ENCODE measurements at regions of chr11 and their contacts with region 1.

Region 1: GRCh38 chr11:102268329-102269193 is 48.7 kb upstream of the BIRC3 start:
- DNase-seq: peak; percentile 92
- H3K4me3 Mint-ChIP-seq: peak overlapping the region; percentile 24
- H3K27ac Mint-ChIP-seq: no peak overlapping the region
- H3K4me1 Mint-ChIP-seq: peaks cover 31% of the 10 kb centered on the region
- H3K27me3 Mint-ChIP-seq: no peaks in the 10 kb centered on the region

Region 2: GRCh38 chr11:102109896-102110760 is 158.4 kb before region 1 on chr11 and contains the start of gene YAP1:
- CTCF ChIA-PET with region 1: no interaction called
- POLR2A ChIA-PET with region 1: no interaction called
- intact Hi-C with region 1: loop called (anchors 5 kb)
- DNase-seq: peak; percentile 75
- H3K4me3 Mint-ChIP-seq: peak within 1 kb of the TSS; percentile 90
- H3K27ac Mint-ChIP-seq: no peak within 1 kb of the TSS
- H3K4me1 Mint-ChIP-seq: peaks cover 9% of the 10 kb centered on the region
- H3K27me3 Mint-ChIP-seq: peaks cover 23% of the 10 kb centered on the region
- total RNA-seq, gene YAP1: 0.24 to 0.71 TPM

Region 3: DNA sequence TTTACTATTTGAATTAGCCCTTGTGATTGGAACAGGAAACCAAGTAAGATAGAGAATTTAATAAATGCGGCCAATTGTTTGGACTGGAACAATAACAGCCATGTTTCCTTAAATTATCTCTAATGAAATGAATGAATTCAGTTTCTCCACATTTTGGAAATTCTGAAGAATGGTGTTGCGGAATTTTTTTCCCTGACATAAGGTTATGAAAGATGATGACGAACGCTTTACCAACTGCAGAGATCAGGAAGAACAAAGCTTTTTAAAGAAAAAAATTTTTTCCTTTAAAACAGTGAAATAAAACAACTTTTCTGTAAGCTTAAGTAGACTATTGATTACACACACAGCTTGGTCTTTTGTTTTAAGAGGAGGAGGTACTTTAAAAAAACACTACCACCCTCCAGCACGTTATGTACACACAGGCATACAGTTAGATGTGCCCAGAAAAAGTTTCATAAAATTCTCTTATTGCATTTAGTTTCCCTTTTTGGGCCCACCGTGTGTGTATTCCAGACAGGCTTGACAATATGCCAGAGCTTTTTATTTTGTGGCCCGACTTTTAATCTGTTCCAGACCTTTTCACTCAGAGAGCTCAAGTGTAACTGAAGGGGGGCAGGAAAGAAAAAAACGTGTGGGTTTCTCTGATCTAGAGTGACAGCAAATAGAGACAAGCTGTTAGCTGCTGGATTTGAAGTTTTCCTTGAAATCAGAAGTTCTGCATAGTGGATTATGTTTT is 81.0 kb before region 1 on chr11:
- CTCF ChIA-PET with region 1: no interaction called
- POLR2A ChIA-PET with region 1: no interaction called
- intact Hi-C with region 1: no loop called
- DNase-seq: no peak
- H3K4me3 Mint-ChIP-seq: no peak overlapping the region
- H3K27ac Mint-ChIP-seq: no peak overlapping the region
- H3K4me1 Mint-ChIP-seq: no peaks in the 10 kb centered on the region
- H3K27me3 Mint-ChIP-seq: peaks cover 10% of the 10 kb centered on the region

Region 4: GRCh38 chr11:102204174-102204573 is 64.4 kb before region 1 on chr11:
- CTCF ChIA-PET with region 1: no interaction called
- POLR2A ChIA-PET with region 1: no interaction called
- intact Hi-C with region 1: no loop called
- DNase-seq: no peak
- H3K4me3 Mint-ChIP-seq: no peak overlapping the region
- H3K27ac Mint-ChIP-seq: no peak overlapping the region
- H3K4me1 Mint-ChIP-seq: no peaks in the 10 kb centered on the region
- H3K27me3 Mint-ChIP-seq: peaks cover 8% of the 10 kb centered on the region

Region 5: DNA sequence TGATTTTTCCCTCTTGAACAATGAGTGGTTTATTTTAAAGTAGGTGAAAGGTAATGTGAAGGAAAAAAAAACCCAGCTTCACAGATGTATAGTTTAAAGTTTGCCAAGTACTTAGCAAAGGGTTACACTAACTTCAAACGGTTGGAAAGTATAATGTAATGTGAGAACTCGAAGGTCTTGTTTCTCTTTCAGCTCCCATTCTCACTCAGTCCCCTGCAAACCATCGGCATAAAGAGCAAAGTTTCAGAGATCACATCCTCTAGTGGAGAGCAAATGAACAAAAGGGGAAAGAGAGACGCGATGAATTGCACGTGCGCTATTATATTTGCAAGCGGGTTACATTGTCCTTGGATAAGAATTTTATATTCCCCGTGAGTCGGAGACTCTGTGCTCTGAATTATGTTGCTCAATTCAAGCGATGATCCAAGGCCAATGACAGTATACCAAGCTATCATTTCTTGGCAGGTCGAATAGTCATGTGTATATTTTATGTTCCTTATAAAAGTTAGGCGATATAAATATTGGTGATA is 11.1 kb after region 1 on chr11:
- CTCF ChIA-PET with region 1: interaction called, 12 read pairs
- POLR2A ChIA-PET with region 1: no interaction called
- intact Hi-C with region 1: loop called (anchors 1 kb)
- DNase-seq: no peak
- H3K4me3 Mint-ChIP-seq: no peak overlapping the region
- H3K27ac Mint-ChIP-seq: no peak overlapping the region
- H3K4me1 Mint-ChIP-seq: peaks cover 10% of the 10 kb centered on the region
- H3K27me3 Mint-ChIP-seq: peaks cover 17% of the 10 kb centered on the region

Region 6: GRCh38 chr11:102306817-102307486 is 38.4 kb after region 1 on chr11:
- CTCF ChIA-PET with region 1: no interaction called
- POLR2A ChIA-PET with region 1: no interaction called
- intact Hi-C with region 1: no loop called
- DNase-seq: no peak
- H3K4me3 Mint-ChIP-seq: peak overlapping the region; percentile 59
- H3K27ac Mint-ChIP-seq: peak overlapping the region; percentile 85
- H3K4me1 Mint-ChIP-seq: peaks cover 63% of the 10 kb centered on the region
- H3K27me3 Mint-ChIP-seq: no peaks in the 10 kb centered on the region

Region 7: GRCh38 chr11:102317099-102317767 is 48.7 kb after region 1 on chr11 and contains the start of gene BIRC3:
- CTCF ChIA-PET with region 1: interaction called, 5 read pairs
- POLR2A ChIA-PET with region 1: no interaction called
- intact Hi-C with region 1: loop called (anchors 1 kb)
- DNase-seq: peak; percentile 96
- H3K4me3 Mint-ChIP-seq: peak within 1 kb of the TSS; percentile 95
- H3K27ac Mint-ChIP-seq: peak within 1 kb of the TSS; percentile 100
- H3K4me1 Mint-ChIP-seq: peaks cover 56% of the 10 kb centered on the region
- H3K27me3 Mint-ChIP-seq: no peaks in the 10 kb centered on the region
- total RNA-seq, gene BIRC3: 135 to 139 TPM

Region 8: GRCh38 chr11:102666331-102666957 is 397.9 kb after region 1 on chr11:
- CTCF ChIA-PET with region 1: interaction called, 13 read pairs
- POLR2A ChIA-PET with region 1: no interaction called
- intact Hi-C with region 1: no loop called
- DNase-seq: peak; percentile 15
- H3K4me3 Mint-ChIP-seq: no peak overlapping the region
- H3K27ac Mint-ChIP-seq: no peak overlapping the region
- H3K4me1 Mint-ChIP-seq: no peaks in the 10 kb centered on the region
- H3K27me3 Mint-ChIP-seq: no peaks in the 10 kb centered on the region

Region 9: GRCh38 chr11:102843474-102843873 is 574.9 kb after region 1 on chr11 and contains the start of gene MMP3:
- CTCF ChIA-PET with region 1: no interaction called
- POLR2A ChIA-PET with region 1: no interaction called
- intact Hi-C with region 1: no loop called
- DNase-seq: no peak
- H3K4me3 Mint-ChIP-seq: no peak within 1 kb of the TSS
- H3K27ac Mint-ChIP-seq: no peak within 1 kb of the TSS
- H3K4me1 Mint-ChIP-seq: no peaks in the 10 kb centered on the region
- H3K27me3 Mint-ChIP-seq: no peaks in the 10 kb centered on the region
- total RNA-seq, gene MMP3: not detected

Measured in activated CD4-positive, alpha-beta memory T cell treated with anti-CD3 and anti-CD28 coated beads for 36 hours (primary cell).